IMR-90 (cell line): ENCODE measurements at regions of chr15 and their contacts with region 1.

Region 1: GRCh38 chr15:81182756-81183438 is 13.8 kb upstream of the IL16 start:
- DNase-seq: no peak
- ATAC-seq: peak; percentile 69
- H3K4me3 ChIP-seq: peak overlapping the region; percentile 43
- H3K27ac ChIP-seq: peak overlapping the region; percentile 92
- H3K4me1 ChIP-seq: peaks cover 23% of the 10 kb centered on the region
- H3K27me3 ChIP-seq: no peaks in the 10 kb centered on the region
- CTCF ChIP-seq: no peak
- POLR2A ChIP-seq: no peak
- RAD21 ChIP-seq: no peak

Region 2: DNA sequence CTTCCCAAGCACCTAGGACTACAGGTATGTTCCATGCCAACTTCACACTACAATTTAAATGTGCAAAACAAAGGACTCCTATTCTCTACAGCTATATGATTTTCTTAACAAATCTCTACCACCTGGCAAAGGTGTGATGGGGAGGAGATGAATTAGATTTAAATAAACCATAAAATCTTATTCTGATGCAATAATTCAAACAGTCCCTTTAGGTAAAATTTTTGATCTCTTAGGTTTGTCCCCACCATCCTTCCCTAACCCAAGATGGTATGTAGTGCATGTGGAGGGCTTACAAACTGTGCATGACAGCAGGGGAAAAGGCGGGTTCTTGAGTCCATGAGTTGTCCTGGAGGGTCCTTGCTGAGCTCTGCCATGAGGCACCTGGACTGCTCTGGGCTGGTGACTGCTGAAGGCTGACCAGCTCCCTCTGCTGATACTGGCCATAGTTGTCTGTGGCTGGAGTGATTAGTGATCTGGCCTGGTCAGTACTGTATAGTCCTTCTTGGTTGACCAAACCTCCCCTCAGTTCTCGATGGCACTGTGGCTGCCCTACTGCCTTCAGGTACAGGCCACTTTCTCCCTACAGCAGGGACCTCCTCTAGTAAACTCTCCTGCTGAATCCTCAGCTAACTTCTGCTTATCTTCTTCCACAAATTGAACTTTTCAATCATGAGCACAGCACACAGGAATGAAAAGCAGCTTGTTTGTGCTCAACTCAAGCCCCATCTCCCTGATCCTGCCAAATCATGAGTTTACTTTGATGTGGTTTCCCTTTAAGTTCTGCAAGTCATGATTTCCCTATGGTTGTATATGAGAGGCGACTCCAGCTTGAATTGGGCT is 18.7 kb before region 1 on chr15:
- CTCF ChIA-PET with region 1: interaction called, 6 read pairs
- POLR2A ChIA-PET with region 1: interaction called, 5 read pairs
- dilution Hi-C with region 1: no loop called
- in situ Hi-C with region 1: no loop called
- intact Hi-C with region 1: loop called (anchors 2 kb)
- DNase-seq: peak; percentile 95
- ATAC-seq: peak; percentile 71
- H3K4me3 ChIP-seq: no peak overlapping the region
- H3K27ac ChIP-seq: peak overlapping the region; percentile 98
- H3K4me1 ChIP-seq: peaks cover 27% of the 10 kb centered on the region
- H3K27me3 ChIP-seq: no peaks in the 10 kb centered on the region
- CTCF ChIP-seq: peak; percentile 29; the same call in 1 of the 2 replicates
- POLR2A ChIP-seq: no peak
- RAD21 ChIP-seq: no peak; the same call in 1 of the 2 replicates

Region 3: GRCh38 chr15:81293728-81294515 is 111.0 kb after region 1 on chr15:
- CTCF ChIA-PET with region 1: no interaction called
- POLR2A ChIA-PET with region 1: no interaction called
- dilution Hi-C with region 1: no loop called
- in situ Hi-C with region 1: no loop called
- intact Hi-C with region 1: no loop called
- DNase-seq: no peak
- ATAC-seq: no peak
- H3K4me3 ChIP-seq: no peak overlapping the region
- H3K27ac ChIP-seq: no peak overlapping the region
- H3K4me1 ChIP-seq: no peaks in the 10 kb centered on the region
- H3K27me3 ChIP-seq: no peaks in the 10 kb centered on the region
- CTCF ChIP-seq: no peak
- POLR2A ChIP-seq: no peak
- RAD21 ChIP-seq: no peak